Tibial artery (tissue), 4 donors: ENCODE measurements at regions of chr20 and their contacts with region 1.

Region 1: DNA sequence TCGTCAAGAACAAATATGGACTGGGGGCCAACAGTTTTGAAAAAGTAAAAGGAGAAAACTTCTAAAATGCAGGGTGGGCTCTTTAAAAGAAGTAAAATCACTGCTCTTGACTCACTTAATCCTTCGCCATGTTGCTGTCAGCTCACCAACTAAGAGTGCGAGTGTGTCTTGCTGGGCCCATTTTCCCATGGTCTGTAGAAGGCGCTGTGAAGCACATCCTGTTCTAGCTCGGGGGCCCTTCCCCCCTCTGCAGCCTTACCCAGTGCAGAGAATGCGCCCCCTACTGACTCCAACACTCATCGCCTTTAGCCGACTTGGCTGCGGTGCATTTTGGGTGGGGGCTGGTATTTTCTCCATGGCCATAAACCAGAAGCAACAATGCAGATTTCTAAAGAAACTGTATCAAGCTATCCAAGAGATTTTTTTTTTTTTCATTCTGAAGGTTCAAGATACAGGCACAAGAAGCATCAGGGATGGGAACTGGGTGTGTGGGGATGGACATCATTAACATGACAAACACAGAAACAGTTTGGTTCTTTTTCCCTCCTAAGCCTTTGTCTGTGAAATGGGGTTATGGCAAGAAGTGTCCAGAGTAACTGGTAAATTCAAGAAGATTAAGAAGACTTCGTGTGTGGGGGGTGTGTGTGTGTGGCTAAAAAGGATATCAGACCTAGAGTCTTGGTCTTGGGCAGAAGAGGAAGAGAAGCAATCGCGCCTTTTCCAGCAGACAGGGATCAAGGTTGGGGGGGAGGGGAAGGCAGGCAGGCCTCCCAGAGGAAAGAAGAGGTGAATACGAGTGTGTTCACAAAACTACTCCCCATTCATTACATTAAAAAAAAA is 1.7 kb downstream of the ADNP start:
- DNase-seq: peak; percentile 89 to 93
- H3K4me3 ChIP-seq: peak overlapping the region; percentile 68 to 91
- H3K27ac ChIP-seq: peak overlapping the region; percentile 82 to 99
- H3K4me1 ChIP-seq: peaks cover 0 to 48% (median 25%) of the 10 kb centered on the region in 4 donors
- H3K27me3 ChIP-seq: no peaks in the 10 kb centered on the region
- CTCF ChIP-seq: peak; percentile 82 to 88

Region 2: GRCh38 chr20:50794846-50795634 is 134.5 kb before region 1 on chr20 and contains the start of gene BCAS4:
- intact Hi-C with region 1: loop called (anchors 2 kb)
- DNase-seq: peak; percentile 51 to 85
- H3K4me3 ChIP-seq: peak within 1 kb of the TSS; percentile 76 to 94
- H3K27ac ChIP-seq: peak within 1 kb of the TSS; percentile 79 to 84
- H3K4me1 ChIP-seq: peaks cover 0 to 32% (median 23%) of the 10 kb centered on the region in 4 donors
- H3K27me3 ChIP-seq: no peaks in the 10 kb centered on the region
- CTCF ChIP-seq: peak; percentile 70 to 99

Region 3: GRCh38 chr20:50815162-50815989 is 114.1 kb before region 1 on chr20:
- intact Hi-C with region 1: loop called (anchors 5 kb)
- DNase-seq: peak; percentile 39 to 80
- H3K4me3 ChIP-seq: no peak overlapping the region
- H3K27ac ChIP-seq: peak overlapping the region; percentile 70 to 76
- H3K4me1 ChIP-seq: peaks cover 0 to 35% (median 21%) of the 10 kb centered on the region in 4 donors
- H3K27me3 ChIP-seq: no peaks in the 10 kb centered on the region
- CTCF ChIP-seq: no peak